ENCODE measurements at regions of chr13 and their contacts with region 1.

Region 1: GRCh38 chr13:30422054-30422839 is at the start of gene UBE2L5:
- DNase-seq: peak; percentile 92
- H3K4me3 ChIP-seq: peak within 1 kb of the TSS; percentile 64
- H3K27ac ChIP-seq: peak within 1 kb of the TSS; percentile 94
- H3K4me1 ChIP-seq: peaks cover 31% of the 10 kb centered on the region
- H3K27me3 ChIP-seq: no peaks in the 10 kb centered on the region
- CTCF ChIP-seq: no peak
- total RNA-seq, gene UBE2L5: 0.21 TPM in 1 of 2 replicates, not detected in the other

Region 2: GRCh38 chr13:30453727-30454126 is 31.5 kb after region 1 on chr13:
- CTCF ChIA-PET with region 1: no interaction called
- POLR2A ChIA-PET with region 1: no interaction called
- intact Hi-C with region 1: loop called (anchors 5 kb)
- DNase-seq: peak; percentile 52
- H3K4me3 ChIP-seq: no peak overlapping the region
- H3K27ac ChIP-seq: no peak overlapping the region
- H3K4me1 ChIP-seq: peaks cover 13% of the 10 kb centered on the region
- H3K27me3 ChIP-seq: no peaks in the 10 kb centered on the region
- CTCF ChIP-seq: peak; percentile 38

Region 3: GRCh38 chr13:30690282-30691188 is 268.3 kb after region 1 on chr13:
- CTCF ChIA-PET with region 1: no interaction called
- POLR2A ChIA-PET with region 1: no interaction called
- intact Hi-C with region 1: no loop called
- DNase-seq: peak; percentile 14
- H3K4me3 ChIP-seq: no peak overlapping the region
- H3K27ac ChIP-seq: no peak overlapping the region
- H3K4me1 ChIP-seq: no peaks in the 10 kb centered on the region
- H3K27me3 ChIP-seq: no peaks in the 10 kb centered on the region
- CTCF ChIP-seq: no peak

Region 4: GRCh38 chr13:30865123-30866049 is 443.1 kb after region 1 on chr13:
- CTCF ChIA-PET with region 1: no interaction called
- POLR2A ChIA-PET with region 1: no interaction called
- intact Hi-C with region 1: loop called (anchors 5 kb)
- DNase-seq: peak; percentile 91
- H3K4me3 ChIP-seq: no peak overlapping the region
- H3K27ac ChIP-seq: no peak overlapping the region
- H3K4me1 ChIP-seq: peaks cover 14% of the 10 kb centered on the region
- H3K27me3 ChIP-seq: no peaks in the 10 kb centered on the region
- CTCF ChIP-seq: peak; percentile 98

Measured in A673 (cell line).